ENCODE measurements at regions of chr12 and their contacts with region 1.

Region 1: GRCh38 chr12:10212201-10213131 is at the start of gene GABARAPL1:
- DNase-seq: peak; percentile 91
- H3K4me3 Mint-ChIP-seq: peak within 1 kb of the TSS; percentile 89
- H3K27ac Mint-ChIP-seq: peak within 1 kb of the TSS; percentile 82
- H3K4me1 Mint-ChIP-seq: peaks cover 25% of the 10 kb centered on the region
- H3K27me3 Mint-ChIP-seq: no peaks in the 10 kb centered on the region
- total RNA-seq, gene GABARAPL1: 3.3 to 4.9 TPM

Region 2: DNA sequence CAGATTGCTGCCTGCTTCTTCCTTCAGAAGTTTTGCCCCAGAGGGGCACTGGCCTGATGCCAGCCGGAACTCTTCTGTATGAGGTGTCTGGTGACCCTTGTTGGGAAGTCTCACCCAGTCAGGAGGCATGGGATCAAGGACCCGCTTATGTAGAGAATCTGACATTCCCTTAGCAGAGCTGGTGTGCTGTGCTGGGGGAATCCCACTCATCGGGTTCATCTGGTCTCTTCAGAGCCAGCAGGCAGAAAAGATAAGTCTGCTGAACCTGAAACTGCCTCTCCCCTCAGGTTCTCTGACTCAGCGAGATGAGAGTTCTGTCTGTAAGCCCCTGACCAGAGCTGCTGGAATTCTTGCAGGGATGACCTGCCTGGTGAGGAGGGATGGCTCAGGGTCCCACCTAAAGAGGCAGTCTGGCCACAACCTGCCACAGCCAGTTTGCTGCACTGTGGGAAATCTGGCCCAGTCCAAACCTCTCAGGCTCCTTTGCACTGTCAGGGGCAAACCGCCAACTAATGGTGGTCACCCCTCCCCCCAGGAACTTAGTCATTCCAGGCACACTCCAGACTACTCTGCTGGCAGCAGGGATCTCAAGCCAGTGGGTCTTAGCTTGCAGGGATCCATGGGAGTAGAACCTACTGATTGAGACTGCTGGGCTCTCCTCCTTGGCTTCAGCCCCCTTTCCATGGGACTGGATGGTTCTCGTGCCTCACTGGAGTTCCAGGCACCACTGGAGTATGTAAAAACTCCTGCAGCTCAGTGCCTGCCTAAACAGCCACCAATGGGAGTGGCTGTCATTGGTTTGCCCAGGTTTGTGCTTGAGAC is 538.9 kb before region 1 on chr12:
- CTCF ChIA-PET with region 1: no interaction called
- intact Hi-C with region 1: loop called (anchors 10 kb)
- DNase-seq: peak; percentile 84
- H3K4me3 Mint-ChIP-seq: peak overlapping the region; percentile 90
- H3K27ac Mint-ChIP-seq: peak overlapping the region; percentile 97
- H3K4me1 Mint-ChIP-seq: peaks cover 35% of the 10 kb centered on the region
- H3K27me3 Mint-ChIP-seq: no peaks in the 10 kb centered on the region

Region 3: DNA sequence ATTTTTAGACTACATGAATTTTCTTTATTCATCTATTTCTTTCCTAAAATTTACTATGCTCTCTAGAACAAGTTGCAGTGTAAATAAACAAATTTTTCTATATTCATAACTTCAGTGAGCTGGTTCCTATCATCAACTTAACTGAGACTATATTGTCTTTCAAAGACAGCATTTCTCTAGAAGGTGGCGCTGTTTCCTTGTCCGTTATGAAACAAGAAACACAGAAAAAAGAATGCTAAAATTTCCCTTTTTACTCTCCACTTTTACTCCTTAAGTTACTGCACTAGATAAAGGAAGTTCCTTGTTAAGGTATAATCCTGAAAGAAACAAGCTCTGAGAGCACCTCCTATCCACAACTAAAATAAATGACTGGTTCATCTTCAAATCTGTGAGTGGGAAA is 272.1 kb before region 1 on chr12:
- CTCF ChIA-PET with region 1: no interaction called
- intact Hi-C with region 1: loop called (anchors 1 kb)
- DNase-seq: peak; percentile 28
- H3K4me3 Mint-ChIP-seq: no peak overlapping the region
- H3K27ac Mint-ChIP-seq: no peak overlapping the region
- H3K4me1 Mint-ChIP-seq: peaks cover 23% of the 10 kb centered on the region
- H3K27me3 Mint-ChIP-seq: no peaks in the 10 kb centered on the region

Region 4: GRCh38 chr12:10175846-10176636 is 36.4 kb before region 1 on chr12:
- CTCF ChIA-PET with region 1: no interaction called
- intact Hi-C with region 1: no loop called
- DNase-seq: no peak
- H3K4me3 Mint-ChIP-seq: no peak overlapping the region
- H3K27ac Mint-ChIP-seq: no peak overlapping the region
- H3K4me1 Mint-ChIP-seq: no peaks in the 10 kb centered on the region
- H3K27me3 Mint-ChIP-seq: peaks cover 5% of the 10 kb centered on the region

Region 5: GRCh38 chr12:10293570-10294227 is 81.2 kb after region 1 on chr12:
- CTCF ChIA-PET with region 1: no interaction called
- intact Hi-C with region 1: loop called (anchors 1 kb)
- DNase-seq: no peak
- H3K4me3 Mint-ChIP-seq: no peak overlapping the region
- H3K27ac Mint-ChIP-seq: peak overlapping the region; percentile 7
- H3K4me1 Mint-ChIP-seq: peaks cover 16% of the 10 kb centered on the region
- H3K27me3 Mint-ChIP-seq: peaks cover 5% of the 10 kb centered on the region

Region 6: GRCh38 chr12:10320643-10321042 is 108.2 kb after region 1 on chr12:
- CTCF ChIA-PET with region 1: interaction called, 3 read pairs
- intact Hi-C with region 1: loop called (anchors 2 kb)
- DNase-seq: no peak
- H3K4me3 Mint-ChIP-seq: no peak overlapping the region
- H3K27ac Mint-ChIP-seq: peak overlapping the region; percentile 2
- H3K4me1 Mint-ChIP-seq: peaks cover 28% of the 10 kb centered on the region
- H3K27me3 Mint-ChIP-seq: no peaks in the 10 kb centered on the region

Region 7: GRCh38 chr12:10613349-10614055 is 401.0 kb after region 1 on chr12 and contains the start of gene MAGOHB:
- CTCF ChIA-PET with region 1: no interaction called
- intact Hi-C with region 1: loop called (anchors 1 kb)
- DNase-seq: peak; percentile 99
- H3K4me3 Mint-ChIP-seq: peak within 1 kb of the TSS; percentile 99
- H3K27ac Mint-ChIP-seq: peak within 1 kb of the TSS; percentile 99
- H3K4me1 Mint-ChIP-seq: peaks cover 30% of the 10 kb centered on the region
- H3K27me3 Mint-ChIP-seq: peaks cover 2% of the 10 kb centered on the region
- total RNA-seq, gene MAGOHB: 58.8 to 61.1 TPM

Region 8: GRCh38 chr12:10749700-10750384 is 537.4 kb after region 1 on chr12:
- CTCF ChIA-PET with region 1: no interaction called
- intact Hi-C with region 1: loop called (anchors 1 kb)
- DNase-seq: peak; percentile 85
- H3K4me3 Mint-ChIP-seq: peak overlapping the region; percentile 54
- H3K27ac Mint-ChIP-seq: no peak overlapping the region
- H3K4me1 Mint-ChIP-seq: peaks cover 10% of the 10 kb centered on the region
- H3K27me3 Mint-ChIP-seq: peaks cover 37% of the 10 kb centered on the region